ENCODE measurements at regions of chr3 and their contacts with region 1.

Region 1: DNA sequence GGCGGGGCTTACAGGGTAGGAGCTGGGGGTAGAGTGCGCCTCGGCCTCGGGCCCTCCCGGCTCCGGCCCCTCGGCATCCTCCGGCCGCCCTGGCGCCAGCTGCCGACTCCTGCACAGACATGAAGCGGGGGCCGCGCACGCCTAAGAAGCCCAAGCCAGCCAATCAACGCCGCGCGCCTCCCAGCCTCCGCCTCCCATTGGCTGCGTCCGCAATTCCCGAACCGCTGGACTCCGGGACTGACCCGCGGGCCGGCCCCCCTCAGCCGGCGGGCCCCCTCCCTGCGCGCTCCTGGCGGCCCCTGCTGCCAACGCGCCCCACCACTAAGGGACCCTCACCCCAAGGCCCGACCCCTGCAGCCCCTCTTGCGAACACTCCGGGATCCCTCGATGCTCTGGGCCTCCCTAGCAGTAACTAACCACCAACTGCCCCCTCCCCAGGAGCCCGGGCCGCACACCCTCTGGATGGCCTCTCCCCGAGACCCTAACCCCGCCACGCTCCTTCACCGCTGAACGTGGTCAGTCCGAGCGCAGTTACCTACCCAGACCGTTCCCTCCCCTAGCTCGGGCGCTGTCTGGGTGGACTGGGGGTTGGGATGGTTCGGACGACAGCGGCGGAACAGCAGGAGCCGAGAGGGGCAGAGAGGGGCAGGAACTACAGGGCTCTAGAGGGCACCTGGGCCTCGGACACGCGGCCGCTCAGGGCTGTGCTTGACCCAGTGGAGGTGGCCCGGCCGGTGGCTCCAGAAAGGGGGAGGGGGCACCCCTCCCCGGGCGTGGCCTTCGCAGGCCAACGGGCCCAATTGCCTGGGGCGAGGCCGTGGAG is 5.0 kb downstream of the GATA2 start:
- DNase-seq: peak; percentile 90 to 94 (median 92)
- ATAC-seq: peak; percentile 76 to 87 (median 84)
- H3K4me3 ChIP-seq: peak overlapping the region; percentile 59 to 84 (median 70)
- H3K27ac ChIP-seq: peak overlapping the region; percentile 64 to 98 (median 93)
- H3K4me1 ChIP-seq: peaks cover 0 to 92% (median 53%) of the 10 kb centered on the region in 12 donors
- H3K27me3 ChIP-seq: peaks cover 39 to 100% (median 86%) of the 10 kb centered on the region in 9 donors
- CTCF ChIP-seq: no peak
- POLR2A ChIP-seq: peak; percentile 69 to 99

Region 2: DNA sequence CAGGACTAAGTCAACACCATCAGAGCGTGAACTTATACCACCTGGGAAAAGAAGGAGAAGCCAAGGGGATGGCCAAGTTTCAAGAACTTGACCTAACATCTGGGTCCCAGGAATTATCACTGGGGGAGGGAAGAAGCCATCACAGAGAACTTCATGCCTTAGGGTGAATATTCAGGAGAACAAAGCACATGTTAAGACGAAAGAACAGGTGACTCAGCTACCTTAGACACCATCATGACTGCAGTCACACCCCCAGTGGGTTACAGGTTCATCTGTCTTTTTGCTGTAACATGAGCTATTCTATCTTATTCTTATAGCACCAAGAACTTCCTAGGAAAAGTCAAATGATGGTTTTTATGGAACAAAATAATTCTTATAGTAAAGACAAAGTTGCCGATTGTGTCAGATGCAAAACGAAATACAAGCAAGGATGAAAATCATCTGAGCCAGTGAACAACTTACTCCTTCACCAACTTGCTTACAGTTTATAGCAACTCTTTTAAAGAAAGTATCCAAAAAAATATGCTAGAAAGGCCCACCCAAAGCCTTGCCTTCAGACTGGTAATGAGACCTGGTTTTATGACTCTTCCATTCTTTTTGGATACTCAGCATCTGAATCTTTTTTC is 969.5 kb before region 1 on chr3:
- intact Hi-C with region 1: no loop called
- DNase-seq: no peak
- ATAC-seq: no peak
- H3K4me3 ChIP-seq: no peak overlapping the region
- H3K27ac ChIP-seq: no peak overlapping the region
- H3K4me1 ChIP-seq: no peaks in the 10 kb centered on the region
- H3K27me3 ChIP-seq: peaks cover 0 to 6% (median 0%) of the 10 kb centered on the region in 9 donors
- CTCF ChIP-seq: no peak
- POLR2A ChIP-seq: no peak

Region 3: GRCh38 chr3:128075516-128076482 is 412.2 kb before region 1 on chr3:
- intact Hi-C with region 1: loop called in 1 of 10 experiments (anchors 5 kb)
- DNase-seq: peak; percentile 86 to 95 (median 91)
- ATAC-seq: peak; percentile 81 to 91 (median 85)
- H3K4me3 ChIP-seq: peak overlapping the region; percentile 8 to 63 (median 52)
- H3K27ac ChIP-seq: peak overlapping the region in 6 of 12 donors; percentile 26 to 60 (median 50)
- H3K4me1 ChIP-seq: peaks cover 0 to 65% (median 29%) of the 10 kb centered on the region in 12 donors
- H3K27me3 ChIP-seq: no peaks in the 10 kb centered on the region
- CTCF ChIP-seq: peak; percentile 94 to 99 (median 98)
- POLR2A ChIP-seq: peak in 1 of 2 donors; percentile 36

Region 4: DNA sequence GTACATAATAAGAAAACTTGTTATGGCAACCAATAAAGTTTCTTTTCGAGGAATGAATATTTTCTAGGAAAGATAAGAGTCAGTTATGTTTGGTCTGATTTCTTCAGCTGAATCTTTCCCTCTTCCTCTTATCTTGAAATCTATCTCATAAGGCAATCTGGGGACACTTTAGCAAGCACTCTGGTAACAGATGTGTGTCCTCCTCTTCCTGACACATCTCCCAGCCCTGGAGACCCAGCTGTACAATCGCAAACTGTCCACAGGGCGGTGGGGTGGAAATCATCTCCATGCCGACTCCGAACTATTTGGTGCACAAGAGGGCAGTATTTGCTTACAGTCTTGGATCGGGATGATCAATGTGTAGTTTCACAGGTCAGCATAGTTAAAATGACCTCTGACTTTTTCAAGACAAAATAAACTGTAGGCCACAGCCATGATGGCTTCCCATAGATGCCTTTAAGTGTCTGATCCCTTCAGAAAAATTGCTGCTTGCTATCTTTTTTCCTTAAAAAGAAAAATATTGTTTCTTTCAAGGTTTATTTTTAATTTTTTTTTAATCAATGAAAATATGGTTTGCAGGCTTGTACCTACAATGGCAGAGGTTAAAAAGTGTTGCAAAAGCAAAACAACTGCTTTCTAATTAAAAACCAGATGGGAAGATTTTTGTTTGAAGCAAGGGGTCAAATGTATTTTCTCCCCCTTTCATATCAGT is 317.1 kb before region 1 on chr3:
- intact Hi-C with region 1: loop called in 1 of 10 experiments (anchors 5 kb)
- DNase-seq: peak in 4 of 5 donors; percentile 55 to 64 (median 62)
- ATAC-seq: peak; percentile 54 to 75 (median 72)
- H3K4me3 ChIP-seq: no peak overlapping the region
- H3K27ac ChIP-seq: no peak overlapping the region
- H3K4me1 ChIP-seq: peaks cover 0 to 73% (median 40%) of the 10 kb centered on the region in 12 donors
- H3K27me3 ChIP-seq: no peaks in the 10 kb centered on the region
- CTCF ChIP-seq: peak; percentile 49 to 88 (median 68)
- POLR2A ChIP-seq: no peak

Region 5: GRCh38 chr3:128307029-128307633 is 180.9 kb before region 1 on chr3:
- intact Hi-C with region 1: loop called in 2 of 10 experiments (anchors 5 to 10 kb)
- DNase-seq: peak in 1 of 5 donors; percentile 9
- ATAC-seq: peak in 1 of 4 donors; percentile 18
- H3K4me3 ChIP-seq: no peak overlapping the region
- H3K27ac ChIP-seq: no peak overlapping the region
- H3K4me1 ChIP-seq: peaks cover 0 to 40% (median 8%) of the 10 kb centered on the region in 12 donors
- H3K27me3 ChIP-seq: no peaks in the 10 kb centered on the region
- CTCF ChIP-seq: peak in 2 of 12 donors; percentile 20 to 28
- POLR2A ChIP-seq: no peak

Region 6: GRCh38 chr3:128322066-128323022 is 165.7 kb before region 1 on chr3:
- intact Hi-C with region 1: loop called in 2 of 10 experiments (anchors 5 to 10 kb)
- DNase-seq: peak; percentile 41 to 80 (median 49)
- ATAC-seq: peak; percentile 45 to 72 (median 56)
- H3K4me3 ChIP-seq: no peak overlapping the region
- H3K27ac ChIP-seq: no peak overlapping the region
- H3K4me1 ChIP-seq: peaks cover 0 to 14% (median 0%) of the 10 kb centered on the region in 12 donors
- H3K27me3 ChIP-seq: no peaks in the 10 kb centered on the region
- CTCF ChIP-seq: peak; percentile 34 to 72 (median 56)
- POLR2A ChIP-seq: no peak

Region 7: DNA sequence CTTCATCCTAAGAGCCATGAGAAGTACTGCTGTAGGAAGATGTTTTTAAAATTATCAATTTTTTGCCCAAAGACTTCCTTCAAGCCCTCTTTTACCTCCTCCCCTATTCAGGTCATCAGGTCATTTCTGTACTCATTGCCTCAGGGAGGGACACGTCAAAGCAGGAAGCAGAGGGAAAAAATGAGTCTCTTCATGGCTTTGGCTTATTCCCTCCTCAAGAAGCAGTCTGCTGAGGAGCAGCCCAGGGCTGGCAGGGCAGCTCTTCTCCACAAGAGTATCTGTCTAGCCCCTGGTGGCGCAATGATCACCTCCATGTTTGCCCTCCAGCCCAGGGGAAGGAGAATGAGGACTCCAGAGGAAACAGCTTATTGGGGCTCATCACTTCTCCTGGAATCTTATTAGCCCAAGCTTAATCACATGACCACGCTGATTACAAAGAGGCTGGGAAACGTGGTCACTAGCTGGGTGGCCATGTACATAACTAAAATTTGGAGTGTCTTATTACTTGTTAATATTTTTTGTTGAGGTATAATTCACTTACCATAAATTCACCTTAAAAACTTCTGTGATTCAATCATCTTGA is 49.2 kb after region 1 on chr3:
- intact Hi-C with region 1: no loop called
- DNase-seq: no peak
- ATAC-seq: no peak
- H3K4me3 ChIP-seq: no peak overlapping the region
- H3K27ac ChIP-seq: no peak overlapping the region
- H3K4me1 ChIP-seq: no peaks in the 10 kb centered on the region
- H3K27me3 ChIP-seq: peaks cover 0 to 25% (median 0%) of the 10 kb centered on the region in 9 donors
- CTCF ChIP-seq: no peak
- POLR2A ChIP-seq: no peak

Region 8: DNA sequence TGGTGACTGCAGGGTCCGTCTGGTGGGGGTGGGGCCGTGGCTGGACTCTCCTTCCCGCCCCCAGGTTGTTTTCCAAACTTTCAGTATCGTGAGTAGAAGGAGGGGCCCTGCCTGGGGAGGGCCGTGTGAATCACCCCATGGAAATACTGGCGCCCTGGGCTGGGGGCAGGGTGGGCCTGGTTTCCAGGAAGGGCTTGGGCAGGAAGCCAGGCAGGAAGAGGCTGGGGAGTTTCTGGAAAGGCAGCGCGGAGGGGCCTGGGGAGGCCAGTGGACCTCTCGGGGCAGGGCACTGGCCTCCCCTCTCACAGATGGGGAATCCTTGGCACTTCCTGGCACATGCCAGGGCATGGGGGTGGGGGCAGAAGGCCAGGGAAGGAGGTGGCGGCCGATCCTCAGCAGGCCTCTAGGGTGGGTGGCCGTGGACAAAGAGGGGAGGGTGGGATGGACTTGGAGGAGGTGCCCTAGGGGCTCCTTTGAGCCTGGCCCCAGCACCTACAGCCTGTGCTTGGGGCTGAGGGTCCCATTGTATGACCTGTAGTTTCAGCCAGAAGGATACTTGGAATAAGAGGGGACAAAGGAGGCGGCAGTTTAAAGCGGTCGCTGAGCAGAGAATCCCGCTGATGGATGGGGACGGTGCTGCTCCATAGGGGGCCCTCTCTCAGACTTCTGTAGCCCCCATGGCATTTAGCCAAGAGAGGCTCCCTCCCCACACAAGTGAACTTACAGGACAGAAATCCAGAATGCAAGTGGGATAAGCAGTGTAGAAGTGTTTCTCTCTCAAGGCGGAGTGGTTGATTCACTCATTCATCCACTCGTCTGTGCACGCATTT is 61.5 kb after region 1 on chr3:
- intact Hi-C with region 1: loop called in 2 of 10 experiments (anchors 2 to 5 kb)
- DNase-seq: peak; percentile 81 to 86 (median 83)
- ATAC-seq: peak; percentile 82 to 94 (median 84)
- H3K4me3 ChIP-seq: peak overlapping the region in 2 of 12 donors; percentile 4 to 7
- H3K27ac ChIP-seq: peak overlapping the region in 11 of 12 donors; percentile 7 to 81 (median 73)
- H3K4me1 ChIP-seq: peaks cover 0 to 37% (median 24%) of the 10 kb centered on the region in 12 donors
- H3K27me3 ChIP-seq: peaks cover 0 to 10% (median under 1%) of the 10 kb centered on the region in 9 donors
- CTCF ChIP-seq: no peak
- POLR2A ChIP-seq: no peak

Region 9: DNA sequence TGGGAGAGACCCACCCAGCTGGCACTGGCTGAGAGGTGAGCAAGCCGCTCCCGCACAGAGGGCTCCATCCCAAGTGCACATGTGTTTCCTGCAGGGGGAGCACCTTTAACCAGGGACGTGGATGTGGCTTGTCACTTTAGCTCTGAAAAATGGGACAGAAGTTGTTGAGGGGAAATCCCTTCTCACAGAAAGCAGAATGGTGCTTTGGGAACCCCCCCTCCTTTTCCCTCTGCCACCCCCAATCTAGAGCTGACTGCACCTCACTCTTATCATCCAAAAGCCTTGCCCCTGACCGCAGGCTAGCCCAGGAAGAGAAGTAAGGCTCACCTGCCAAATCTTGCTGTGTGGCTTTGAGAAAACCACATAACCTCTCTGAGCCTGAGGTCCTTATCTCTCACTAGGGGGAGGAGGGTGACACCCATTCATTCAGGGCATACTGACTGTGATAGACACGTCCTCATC is 84.7 kb after region 1 on chr3:
- intact Hi-C with region 1: loop called in 4 of 10 experiments (anchors 5 kb)
- DNase-seq: no peak
- ATAC-seq: no peak
- H3K4me3 ChIP-seq: no peak overlapping the region
- H3K27ac ChIP-seq: peak overlapping the region in 1 of 12 donors; percentile 76
- H3K4me1 ChIP-seq: peaks cover 0 to 33% (median 16%) of the 10 kb centered on the region in 12 donors
- H3K27me3 ChIP-seq: peaks cover 0 to 17% (median 0%) of the 10 kb centered on the region in 9 donors
- CTCF ChIP-seq: peak in 4 of 12 donors; percentile 20 to 26 (median 24)
- POLR2A ChIP-seq: no peak

Measured in heart left ventricle (tissue), 16 donors.